WTC11 (cell line): ENCODE measurements at regions of chr1 and their contacts with region 1.

Region 1: GRCh38 chr1:26417111-26417759 is 6.6 kb downstream of the LIN28A start:
- DNase-seq: peak; percentile 95
- ATAC-seq: peak; percentile 64
- H3K4me3 Mint-ChIP-seq: peak overlapping the region; percentile 61
- H3K27ac Mint-ChIP-seq: peak overlapping the region; percentile 100
- H3K4me1 Mint-ChIP-seq: peaks cover 91% of the 10 kb centered on the region
- H3K27me3 Mint-ChIP-seq: no peaks in the 10 kb centered on the region
- CTCF ChIP-seq: peak; percentile 92

Region 2: GRCh38 chr1:26233903-26234643 is 183.2 kb before region 1 on chr1 and contains the start of gene CEP85:
- CTCF ChIA-PET with region 1: interaction called, 10 read pairs
- POLR2A ChIA-PET with region 1: no interaction called
- DNase-seq: peak; percentile 99
- ATAC-seq: peak; percentile 96
- H3K4me3 Mint-ChIP-seq: peak within 1 kb of the TSS; percentile 99
- H3K27ac Mint-ChIP-seq: peak within 1 kb of the TSS; percentile 87
- H3K4me1 Mint-ChIP-seq: peaks cover 25% of the 10 kb centered on the region
- H3K27me3 Mint-ChIP-seq: peaks cover 4% of the 10 kb centered on the region
- CTCF ChIP-seq: peak; percentile 49; the same call in 1 of the 2 replicates
- total RNA-seq, gene CEP85: 32.0 to 40.8 TPM (median 35.3 TPM) in 3 replicates

Region 3: DNA sequence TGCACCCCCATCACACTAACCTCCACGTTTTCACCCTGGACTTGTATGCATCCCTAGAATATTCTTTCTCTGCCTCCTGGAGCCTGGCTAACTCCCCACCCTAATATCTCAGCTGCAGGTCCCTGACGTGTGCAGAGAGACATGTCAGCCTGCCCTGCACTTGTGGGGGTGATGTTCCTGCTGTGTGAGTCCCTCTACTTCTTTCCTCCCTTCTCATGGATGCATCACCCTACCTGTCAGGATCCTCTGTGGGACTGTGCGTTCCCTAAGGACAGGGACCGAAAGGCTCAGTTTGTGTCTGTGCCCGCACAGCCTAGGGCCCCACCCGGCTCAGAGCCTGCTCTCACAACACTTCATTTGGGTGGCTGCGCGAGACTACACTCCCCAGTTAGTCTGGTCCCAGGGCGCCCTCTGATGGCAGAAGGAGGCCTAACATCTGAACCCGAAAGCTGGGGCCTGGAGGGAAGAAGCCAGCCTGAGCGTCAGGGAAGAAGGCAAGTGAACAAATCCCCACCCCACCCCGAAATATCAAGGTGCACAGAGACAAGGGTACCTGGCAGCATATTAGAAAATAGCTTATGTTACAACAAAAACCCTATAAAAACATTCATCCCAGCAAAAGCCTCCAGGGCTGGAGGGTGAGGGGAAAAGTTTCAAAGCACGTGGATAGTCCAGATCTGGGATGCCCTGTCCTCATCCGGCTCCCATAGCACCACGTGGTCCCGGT is 95.8 kb before region 1 on chr1:
- CTCF ChIA-PET with region 1: interaction called, 21 read pairs
- POLR2A ChIA-PET with region 1: interaction called, 4 read pairs
- DNase-seq: peak; percentile 98
- ATAC-seq: peak; percentile 83
- H3K4me3 Mint-ChIP-seq: no peak overlapping the region
- H3K27ac Mint-ChIP-seq: peak overlapping the region; percentile 93
- H3K4me1 Mint-ChIP-seq: peaks cover 20% of the 10 kb centered on the region
- H3K27me3 Mint-ChIP-seq: no peaks in the 10 kb centered on the region
- CTCF ChIP-seq: peak; percentile 85

Region 4: DNA sequence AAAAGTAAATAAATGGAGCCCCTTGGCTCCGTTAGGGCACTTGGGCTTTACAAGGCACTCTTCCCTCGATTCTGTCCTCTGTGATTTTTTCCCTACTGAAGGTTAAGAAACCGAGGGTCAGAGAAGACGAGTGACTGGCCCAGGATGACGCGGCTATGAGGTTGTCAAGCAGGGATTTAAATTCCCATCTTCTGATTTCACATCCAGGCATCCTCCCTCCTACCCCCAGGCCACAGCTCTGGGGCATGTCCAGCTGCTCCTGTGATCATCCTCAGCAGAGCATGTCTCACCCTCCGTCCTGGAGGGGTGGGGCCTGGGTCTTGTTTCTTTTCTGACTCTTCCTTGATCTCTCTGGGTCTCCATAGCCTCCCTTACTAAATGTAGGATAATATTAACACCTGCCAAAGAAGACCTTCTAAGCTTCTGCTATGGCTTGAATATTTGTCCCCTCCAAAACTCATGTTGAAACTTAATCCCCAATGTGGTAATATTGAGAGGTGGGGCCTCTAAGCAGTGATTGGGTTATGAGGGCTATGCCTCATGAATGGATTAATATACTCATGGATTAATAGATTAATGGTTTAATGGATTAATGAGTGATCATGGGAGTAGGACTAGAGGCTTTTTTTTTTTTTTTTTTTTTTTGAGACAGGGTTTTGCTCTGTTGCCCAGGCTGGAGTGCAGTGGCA is 67.9 kb before region 1 on chr1:
- CTCF ChIA-PET with region 1: interaction called, 10 read pairs
- POLR2A ChIA-PET with region 1: no interaction called
- DNase-seq: no peak
- ATAC-seq: no peak
- H3K4me3 Mint-ChIP-seq: no peak overlapping the region
- H3K27ac Mint-ChIP-seq: 0 out of 2 replicates have a peak overlapping the region, but pooled peaks have one; percentile 26
- H3K4me1 Mint-ChIP-seq: peaks cover 32% of the 10 kb centered on the region
- H3K27me3 Mint-ChIP-seq: no peaks in the 10 kb centered on the region
- CTCF ChIP-seq: no peak

Region 5: DNA sequence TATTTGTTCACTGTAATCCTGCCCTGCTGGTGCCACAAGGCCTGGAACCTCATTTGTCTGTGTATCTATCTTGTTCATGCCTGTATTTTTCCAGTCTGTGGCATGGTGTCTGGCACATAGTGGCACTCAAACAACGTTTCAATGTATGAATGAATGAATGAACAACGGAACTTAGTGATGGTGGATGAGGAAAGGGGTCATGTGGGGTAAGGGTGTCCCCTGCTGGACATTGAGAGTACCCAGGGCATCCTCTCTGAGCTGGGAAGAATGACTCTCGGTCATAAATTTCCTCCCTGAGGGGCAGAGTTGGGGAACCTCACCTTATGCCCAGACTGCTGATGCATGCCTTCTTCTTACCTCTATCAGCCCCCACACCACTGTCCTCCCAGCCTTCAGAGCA is 25.8 kb before region 1 on chr1:
- CTCF ChIA-PET with region 1: interaction called, 60 read pairs
- POLR2A ChIA-PET with region 1: interaction called, 3 read pairs
- DNase-seq: peak; percentile 38
- ATAC-seq: peak; percentile 86
- H3K4me3 Mint-ChIP-seq: no peak overlapping the region
- H3K27ac Mint-ChIP-seq: no peak overlapping the region
- H3K4me1 Mint-ChIP-seq: peaks cover 18% of the 10 kb centered on the region
- H3K27me3 Mint-ChIP-seq: no peaks in the 10 kb centered on the region
- CTCF ChIP-seq: peak; percentile 72

Region 6: GRCh38 chr1:26431979-26432695 is 14.9 kb after region 1 on chr1 and contains the start of gene DHDDS:
- CTCF ChIA-PET with region 1: interaction called, 39 read pairs
- POLR2A ChIA-PET with region 1: interaction called, 11 read pairs
- DNase-seq: peak; percentile 97
- ATAC-seq: peak; percentile 87
- H3K4me3 Mint-ChIP-seq: peak within 1 kb of the TSS; percentile 96
- H3K27ac Mint-ChIP-seq: peak within 1 kb of the TSS; percentile 97
- H3K4me1 Mint-ChIP-seq: peaks cover 44% of the 10 kb centered on the region
- H3K27me3 Mint-ChIP-seq: no peaks in the 10 kb centered on the region
- CTCF ChIP-seq: no peak
- total RNA-seq, gene DHDDS: 44.9 to 55.4 TPM (median 47.1 TPM) in 3 replicates

Region 7: GRCh38 chr1:26500488-26501175 is 83.4 kb after region 1 on chr1:
- CTCF ChIA-PET with region 1: interaction called, 12 read pairs
- POLR2A ChIA-PET with region 1: interaction called, 3 read pairs
- DNase-seq: peak; percentile 89
- ATAC-seq: peak; percentile 63
- H3K4me3 Mint-ChIP-seq: peak overlapping the region; percentile 81
- H3K27ac Mint-ChIP-seq: peak overlapping the region; percentile 76; the same call in 1 of the 2 replicates
- H3K4me1 Mint-ChIP-seq: no peaks in the 10 kb centered on the region
- H3K27me3 Mint-ChIP-seq: no peaks in the 10 kb centered on the region; the same call in 1 of the 2 replicates
- CTCF ChIP-seq: no peak